CD4-positive, alpha-beta T cell (primary cell): ENCODE measurements at regions of chr12 and their contacts with region 1.

Region 1: GRCh38 chr12:57063991-57064685 is 14.2 kb upstream of the MYO1A start:
- DNase-seq: peak in 8 of 14 experiments; percentile 6 to 92 (median 57)
- ATAC-seq: peak; percentile 95
- H3K4me3 ChIP-seq: peak overlapping the region; percentile 39
- H3K4me3 Mint-ChIP-seq: peak overlapping the region; percentile 70
- H3K27ac ChIP-seq: peak overlapping the region; percentile 70 to 82
- H3K27ac Mint-ChIP-seq: peak overlapping the region; percentile 87
- H3K4me1 ChIP-seq: peaks cover 12% of the 10 kb centered on the region
- H3K4me1 Mint-ChIP-seq: peaks cover 34% of the 10 kb centered on the region
- H3K27me3 ChIP-seq: no peaks in the 10 kb centered on the region
- H3K27me3 Mint-ChIP-seq: no peaks in the 10 kb centered on the region
- CTCF ChIP-seq: no peak

Region 2: GRCh38 chr12:56751712-56752598 is 312.2 kb before region 1 on chr12 and contains the start of gene PRIM1:
- CTCF ChIA-PET with region 1: no interaction called
- POLR2A ChIA-PET with region 1: no interaction called
- intact Hi-C with region 1: loop called (anchors 2 to 5 kb)
- DNase-seq: peak; percentile 66 to 91 (median 78)
- ATAC-seq: peak; percentile 80
- H3K4me3 ChIP-seq: peak within 1 kb of the TSS; percentile 96
- H3K4me3 Mint-ChIP-seq: peak within 1 kb of the TSS; percentile 98
- H3K27ac ChIP-seq: peak within 1 kb of the TSS; percentile 68 to 80
- H3K27ac Mint-ChIP-seq: peak within 1 kb of the TSS; percentile 95
- H3K4me1 ChIP-seq: peaks cover 10% of the 10 kb centered on the region
- H3K4me1 Mint-ChIP-seq: peaks cover 33% of the 10 kb centered on the region
- H3K27me3 ChIP-seq: no peaks in the 10 kb centered on the region
- H3K27me3 Mint-ChIP-seq: no peaks in the 10 kb centered on the region
- CTCF ChIP-seq: peak; percentile 41
- total RNA-seq, gene PRIM1: 5.3 to 6.1 TPM

Region 3: GRCh38 chr12:57005980-57006808 is 57.9 kb before region 1 on chr12 and contains the start of gene ZBTB39:
- CTCF ChIA-PET with region 1: interaction called, 6 read pairs
- POLR2A ChIA-PET with region 1: interaction called, 8 read pairs
- intact Hi-C with region 1: loop called (anchors 1 kb)
- DNase-seq: peak; percentile 32 to 90 (median 60)
- ATAC-seq: peak; percentile 74
- H3K4me3 ChIP-seq: peak within 1 kb of the TSS; percentile 76
- H3K4me3 Mint-ChIP-seq: peak within 1 kb of the TSS; percentile 93
- H3K27ac ChIP-seq: peak within 1 kb of the TSS; percentile 33 to 47
- H3K27ac Mint-ChIP-seq: peak within 1 kb of the TSS; percentile 81
- H3K4me1 ChIP-seq: peaks cover 51% of the 10 kb centered on the region
- H3K4me1 Mint-ChIP-seq: peaks cover 66% of the 10 kb centered on the region
- H3K27me3 ChIP-seq: no peaks in the 10 kb centered on the region
- H3K27me3 Mint-ChIP-seq: no peaks in the 10 kb centered on the region
- CTCF ChIP-seq: peak; percentile 49
- total RNA-seq, gene ZBTB39: 6.9 to 8.0 TPM

Region 4: DNA sequence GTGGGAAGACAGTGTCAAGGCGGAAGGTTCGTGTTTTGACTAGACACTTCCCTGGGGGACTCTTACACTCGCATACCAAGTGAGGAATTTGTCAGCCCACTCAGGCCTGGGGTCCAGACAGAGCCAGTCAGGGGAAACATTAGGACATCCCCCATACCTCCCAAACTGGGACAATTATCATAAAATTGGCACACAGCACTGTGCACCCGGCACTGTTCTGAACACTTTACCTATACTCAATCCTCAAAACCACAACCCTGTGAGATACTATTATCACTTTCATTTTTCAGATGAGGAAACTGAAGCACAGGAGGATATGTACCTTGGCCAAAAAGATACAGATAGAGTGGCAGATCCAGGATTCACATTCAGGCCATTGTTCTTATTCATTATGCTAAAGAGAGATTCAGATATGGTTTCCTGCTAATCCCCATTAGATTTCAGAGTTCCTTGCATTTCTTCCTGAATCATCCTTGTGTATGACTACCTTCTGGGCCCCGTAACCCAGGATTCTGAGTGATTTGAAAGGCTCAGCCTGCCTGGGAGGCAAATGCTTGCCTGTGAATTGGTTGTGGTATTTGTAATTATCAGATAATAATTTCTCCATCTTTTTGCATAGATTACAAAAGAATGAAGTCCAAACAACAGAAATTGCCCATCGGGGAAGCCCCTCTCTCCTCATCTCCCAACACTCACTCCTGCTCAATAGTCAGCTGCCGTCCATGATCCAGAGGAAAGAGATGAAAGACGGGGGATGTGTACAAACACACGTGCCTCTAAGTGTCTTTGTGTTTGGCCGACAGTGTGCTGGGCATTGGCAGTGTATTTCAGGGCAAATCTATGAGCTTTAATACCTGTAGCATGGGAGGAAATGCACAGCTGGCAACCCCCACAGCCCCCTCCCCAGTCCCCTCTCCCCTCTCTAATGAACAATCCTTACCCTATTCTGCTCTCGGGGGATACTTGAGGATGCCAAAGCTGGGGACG is 52.4 kb before region 1 on chr12:
- CTCF ChIA-PET with region 1: interaction called, 6 read pairs
- POLR2A ChIA-PET with region 1: interaction called, 8 read pairs
- intact Hi-C with region 1: loop called (anchors 1 kb)
- DNase-seq: peak in 4 of 14 experiments; percentile 33 to 67 (median 40)
- ATAC-seq: peak; percentile 30
- H3K4me3 ChIP-seq: peak overlapping the region; percentile 25
- H3K4me3 Mint-ChIP-seq: peak overlapping the region; percentile 44
- H3K27ac ChIP-seq: peak overlapping the region; percentile 29 to 54
- H3K27ac Mint-ChIP-seq: peak overlapping the region; percentile 45
- H3K4me1 ChIP-seq: peaks cover 37% of the 10 kb centered on the region
- H3K4me1 Mint-ChIP-seq: peaks cover 62% of the 10 kb centered on the region
- H3K27me3 ChIP-seq: no peaks in the 10 kb centered on the region
- H3K27me3 Mint-ChIP-seq: no peaks in the 10 kb centered on the region
- CTCF ChIP-seq: no peak

Region 5: GRCh38 chr12:57078519-57079404 is 14.6 kb after region 1 on chr12 and contains the start of gene NEMP1:
- CTCF ChIA-PET with region 1: interaction called, 24 read pairs
- POLR2A ChIA-PET with region 1: interaction called, 26 read pairs
- intact Hi-C with region 1: loop called in 1 of 2 experiments (anchors 1 kb)
- DNase-seq: peak; percentile 85 to 100 (median 92)
- ATAC-seq: peak; percentile 94
- H3K4me3 ChIP-seq: peak within 1 kb of the TSS; percentile 85
- H3K4me3 Mint-ChIP-seq: peak within 1 kb of the TSS; percentile 95
- H3K27ac ChIP-seq: peak within 1 kb of the TSS; percentile 73 to 74
- H3K27ac Mint-ChIP-seq: peak within 1 kb of the TSS; percentile 88
- H3K4me1 ChIP-seq: peaks cover 28% of the 10 kb centered on the region
- H3K4me1 Mint-ChIP-seq: peaks cover 23% of the 10 kb centered on the region
- H3K27me3 ChIP-seq: no peaks in the 10 kb centered on the region
- H3K27me3 Mint-ChIP-seq: no peaks in the 10 kb centered on the region
- CTCF ChIP-seq: no peak
- total RNA-seq, gene NEMP1: 7.2 to 9.9 TPM

Region 6: DNA sequence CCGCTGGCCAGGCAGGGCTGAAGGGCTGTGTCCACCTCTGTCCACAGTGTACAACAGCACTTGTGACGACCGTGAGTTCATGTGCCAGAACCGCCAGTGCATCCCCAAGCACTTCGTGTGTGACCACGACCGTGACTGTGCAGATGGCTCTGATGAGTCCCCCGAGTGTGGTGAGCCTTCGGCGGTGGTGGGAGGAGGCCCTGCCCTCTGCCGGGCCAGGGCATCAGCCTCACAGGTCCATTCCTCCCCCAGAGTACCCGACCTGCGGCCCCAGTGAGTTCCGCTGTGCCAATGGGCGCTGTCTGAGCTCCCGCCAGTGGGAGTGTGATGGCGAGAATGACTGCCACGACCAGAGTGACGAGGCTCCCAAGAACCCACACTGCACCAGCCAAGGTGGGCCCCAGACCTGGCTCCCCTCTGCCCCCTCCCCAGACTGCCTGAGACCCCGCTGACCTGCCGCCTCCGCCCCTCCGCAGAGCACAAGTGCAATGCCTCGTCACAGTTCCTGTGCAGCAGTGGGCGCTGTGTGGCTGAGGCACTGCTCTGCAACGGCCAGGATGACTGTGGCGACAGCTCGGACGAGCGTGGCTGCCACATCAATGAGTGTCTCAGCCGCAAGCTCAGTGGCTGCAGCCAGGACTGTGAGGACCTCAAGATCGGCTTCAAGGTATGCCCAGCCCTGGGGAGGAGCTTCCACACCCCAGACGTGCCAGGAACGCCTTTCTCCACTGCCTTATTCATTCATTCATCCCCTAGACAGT is 131.7 kb after region 1 on chr12:
- CTCF ChIA-PET with region 1: no interaction called
- POLR2A ChIA-PET with region 1: no interaction called
- intact Hi-C with region 1: no loop called
- DNase-seq: no peak
- ATAC-seq: no peak
- H3K4me3 ChIP-seq: no peak overlapping the region
- H3K4me3 Mint-ChIP-seq: no peak overlapping the region
- H3K27ac ChIP-seq: no peak overlapping the region
- H3K27ac Mint-ChIP-seq: no peak overlapping the region
- H3K4me1 ChIP-seq: no peaks in the 10 kb centered on the region
- H3K4me1 Mint-ChIP-seq: no peaks in the 10 kb centered on the region
- H3K27me3 ChIP-seq: no peaks in the 10 kb centered on the region
- H3K27me3 Mint-ChIP-seq: no peaks in the 10 kb centered on the region
- CTCF ChIP-seq: no peak